ENCODE measurements at regions of chr6 and their contacts with region 1.

Region 1: DNA sequence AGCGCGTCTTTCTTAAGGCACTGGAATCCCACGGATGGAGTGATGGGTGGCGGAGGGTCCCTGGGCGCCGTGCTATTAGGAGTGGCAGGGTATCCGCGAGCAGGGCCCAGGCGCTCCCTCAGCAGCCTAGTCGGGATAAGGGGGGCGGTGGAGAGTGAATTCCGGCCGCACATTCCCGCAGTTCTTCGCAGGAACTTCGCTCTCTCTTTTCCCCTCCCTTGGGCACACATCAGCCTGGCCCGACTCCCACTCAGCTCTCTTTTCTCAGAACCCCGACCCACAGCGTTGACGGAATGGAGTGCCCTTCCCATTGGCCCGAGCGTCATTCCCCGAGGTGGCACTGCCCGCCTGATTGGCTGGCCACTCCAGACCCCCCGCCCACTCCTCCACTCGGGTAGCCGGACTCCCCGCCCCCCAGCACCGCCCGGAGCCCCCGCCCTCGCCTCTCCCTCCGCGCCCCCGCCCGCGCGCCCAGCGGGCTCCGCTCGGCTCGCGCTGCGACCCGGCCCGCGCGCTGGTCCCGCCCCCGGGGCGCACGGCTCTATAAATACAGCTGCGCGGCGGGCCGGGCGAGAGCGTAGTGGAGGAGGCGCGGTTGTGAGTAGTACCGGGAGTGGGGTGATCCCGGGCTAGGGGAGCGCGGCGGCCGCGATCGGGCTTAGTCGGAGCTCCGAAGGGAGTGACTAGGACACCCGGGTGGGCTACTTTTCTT is at the start of gene ID4:
- DNase-seq: no peak
- H3K4me3 ChIP-seq: peak within 1 kb of the TSS; percentile 80
- H3K27ac ChIP-seq: peak within 1 kb of the TSS; percentile 96
- H3K4me1 ChIP-seq: peaks cover 41% of the 10 kb centered on the region
- CTCF ChIP-seq: no peak
- total RNA-seq, gene ID4: 2.0 and 2.1 TPM in 2 replicates

Region 2: GRCh38 chr6:19587238-19587942 is 249.6 kb before region 1 on chr6:
- CTCF ChIA-PET with region 1: no interaction called
- POLR2A ChIA-PET with region 1: interaction called, 6 read pairs
- intact Hi-C with region 1: loop called (anchors 2 kb)
- DNase-seq: peak; percentile 85
- H3K4me3 ChIP-seq: peak overlapping the region; percentile 42
- H3K27ac ChIP-seq: peak overlapping the region; percentile 93
- H3K4me1 ChIP-seq: peaks cover 52% of the 10 kb centered on the region
- CTCF ChIP-seq: no peak

Region 3: DNA sequence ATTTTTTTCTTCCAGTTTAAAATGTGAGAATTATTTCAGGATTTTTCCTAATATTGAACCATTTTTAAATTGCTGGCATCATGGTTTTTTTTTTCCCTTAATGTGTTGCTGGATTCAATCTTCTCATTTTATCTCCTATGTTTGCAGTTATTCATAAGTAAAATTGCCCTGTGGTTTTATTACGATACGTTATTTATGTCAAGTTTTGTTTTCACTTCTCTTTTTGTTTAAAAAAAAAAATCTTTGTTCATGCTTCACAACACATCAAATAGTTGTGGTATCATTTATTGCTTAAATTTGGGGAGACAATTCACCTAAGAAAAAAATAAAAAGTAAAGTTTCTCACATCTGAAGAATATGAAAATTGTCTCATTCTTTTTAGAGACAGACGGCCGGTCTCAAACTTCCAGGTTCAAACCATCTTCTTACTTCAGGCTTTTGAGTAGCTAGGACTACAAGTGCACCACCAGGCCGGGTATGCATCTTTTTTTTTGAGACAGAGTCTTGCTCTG is 239.1 kb before region 1 on chr6:
- CTCF ChIA-PET with region 1: no interaction called
- POLR2A ChIA-PET with region 1: interaction called, 7 read pairs
- intact Hi-C with region 1: loop called (anchors 2 kb)
- DNase-seq: peak; percentile 83
- H3K4me3 ChIP-seq: peak overlapping the region; percentile 31
- H3K27ac ChIP-seq: peak overlapping the region; percentile 95
- H3K4me1 ChIP-seq: peaks cover 80% of the 10 kb centered on the region
- CTCF ChIP-seq: no peak

Region 4: DNA sequence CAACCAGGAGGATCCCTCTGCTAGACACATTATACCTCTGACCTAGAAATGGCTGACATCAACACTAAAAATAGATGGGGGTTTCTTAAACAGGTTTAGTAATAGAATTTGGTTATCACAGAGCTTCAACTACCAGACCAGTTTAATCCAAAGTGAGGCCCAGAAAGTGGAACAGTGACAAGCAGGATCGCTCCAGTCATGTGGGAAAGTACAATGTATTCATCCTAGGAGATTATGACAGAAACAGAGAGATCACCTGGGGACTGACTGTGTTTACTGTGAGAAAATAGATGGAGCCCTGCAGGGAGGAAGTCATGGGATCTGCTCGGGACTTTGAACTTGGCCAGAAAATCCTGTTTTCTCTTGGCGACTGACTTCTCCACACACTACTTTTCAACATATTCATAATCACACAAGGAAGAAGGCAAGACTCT is 1517.9 kb after region 1 on chr6:
- CTCF ChIA-PET with region 1: no interaction called
- POLR2A ChIA-PET with region 1: no interaction called
- intact Hi-C with region 1: no loop called
- DNase-seq: no peak
- H3K4me3 ChIP-seq: no peak overlapping the region
- H3K27ac ChIP-seq: no peak overlapping the region
- H3K4me1 ChIP-seq: no peaks in the 10 kb centered on the region
- CTCF ChIP-seq: no peak

Measured in OCI-LY7 (cell line).